Ascending aorta (tissue), 2 donors: ENCODE measurements at regions of chr13 and their contacts with region 1.

Region 1: DNA sequence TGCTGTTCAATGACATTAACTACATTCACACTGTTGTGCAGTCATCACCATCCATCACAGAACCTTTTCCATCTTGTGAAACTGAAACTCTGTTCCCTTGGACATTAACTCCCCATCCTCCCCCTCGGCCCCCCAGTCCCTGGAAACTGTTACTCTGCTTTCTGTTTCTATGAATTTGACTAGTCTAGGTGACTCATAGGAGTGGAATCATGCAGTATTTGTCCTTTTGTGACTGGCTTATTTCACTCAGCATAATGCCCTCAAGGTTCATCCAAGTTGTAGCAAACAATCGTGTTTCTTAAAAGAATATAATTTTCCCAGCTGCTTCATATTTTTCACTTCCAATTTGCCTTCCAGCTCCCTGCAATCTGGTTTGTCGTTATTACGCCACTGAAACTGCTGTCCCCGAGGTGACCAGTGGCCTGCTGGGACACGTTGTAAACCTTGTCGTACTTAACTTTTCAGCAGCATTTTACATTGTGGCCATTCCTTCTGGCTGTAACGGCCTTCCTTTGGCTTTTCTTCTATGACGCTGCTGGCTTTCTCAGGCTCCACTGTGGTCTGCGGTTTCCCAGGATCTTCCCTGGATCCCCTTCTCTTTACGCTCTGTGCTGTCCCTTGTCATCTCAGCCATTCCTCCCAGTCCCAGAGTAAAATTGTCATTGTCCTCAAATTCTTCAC is 74.0 kb downstream of the DHRS12 start:
- DNase-seq: peak; percentile 29 to 90
- H3K4me3 ChIP-seq: peak overlapping the region in 1 of 2 donors; percentile 51
- H3K27ac ChIP-seq: peak overlapping the region; percentile 84 to 93
- H3K4me1 ChIP-seq: peaks cover 15 to 47% of the 10 kb centered on the region in 2 donors
- H3K27me3 ChIP-seq: no peaks in the 10 kb centered on the region
- CTCF ChIP-seq: no peak

Region 2: GRCh38 chr13:51222037-51222685 is 507.8 kb before region 1 on chr13 and contains the start of gene FAM124A:
- intact Hi-C with region 1: loop called (anchors 5 kb)
- DNase-seq: peak in 1 of 2 donors; percentile 67
- H3K4me3 ChIP-seq: peak within 1 kb of the TSS; percentile 82 to 92
- H3K27ac ChIP-seq: peak within 1 kb of the TSS in 1 of 2 donors; percentile 12
- H3K4me1 ChIP-seq: no peaks in the 10 kb centered on the region
- H3K27me3 ChIP-seq: no peaks in the 10 kb centered on the region
- CTCF ChIP-seq: peak in 1 of 3 experiments; percentile 60
- total RNA-seq, gene FAM124A: 22.4 TPM

Region 3: GRCh38 chr13:51625555-51626345 is 104.3 kb before region 1 on chr13:
- intact Hi-C with region 1: loop called (anchors 5 kb)
- DNase-seq: no peak
- H3K4me3 ChIP-seq: no peak overlapping the region
- H3K27ac ChIP-seq: no peak overlapping the region
- H3K4me1 ChIP-seq: peaks cover 5 to 24% of the 10 kb centered on the region in 2 donors
- H3K27me3 ChIP-seq: no peaks in the 10 kb centered on the region
- CTCF ChIP-seq: no peak

Region 4: DNA sequence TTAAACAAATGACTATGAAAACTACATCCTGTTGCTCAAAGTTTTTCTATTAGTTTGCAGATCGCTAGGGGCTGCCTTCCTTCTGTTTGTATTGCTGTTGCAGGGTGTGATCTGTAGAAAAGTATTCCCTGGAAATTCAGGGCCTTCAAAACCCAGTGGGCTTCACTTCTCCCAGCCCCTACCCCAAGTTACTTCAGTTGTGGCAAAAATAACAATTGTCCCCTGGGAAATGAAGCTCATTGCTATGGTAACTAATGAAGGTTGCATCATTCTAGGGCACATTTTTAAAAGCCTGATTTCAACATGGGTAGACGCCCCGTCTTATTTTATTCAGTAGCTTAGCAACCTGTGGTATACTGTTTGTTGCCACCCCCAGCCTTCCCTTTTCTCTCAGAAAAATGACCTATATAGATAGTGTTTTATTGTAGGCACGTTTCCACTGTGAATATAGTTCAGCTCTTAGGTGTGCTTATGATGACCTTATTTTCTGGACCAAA is 84.8 kb before region 1 on chr13:
- intact Hi-C with region 1: loop called (anchors 5 kb)
- DNase-seq: peak in 1 of 2 donors; percentile 66
- H3K4me3 ChIP-seq: no peak overlapping the region
- H3K27ac ChIP-seq: no peak overlapping the region
- H3K4me1 ChIP-seq: peaks cover 0 to 27% of the 10 kb centered on the region in 2 donors
- H3K27me3 ChIP-seq: no peaks in the 10 kb centered on the region
- CTCF ChIP-seq: no peak